Activated T-helper 1 cell treated with anti-CD3 and anti-CD28 coated beads, Interleukin-12 subunit alpha, Interleukin-12 subunit beta, Interleukin-2, Interleukin-4 antibody, amounts not matched to agents 30 ng/mL and 10 ng/mL and 1 ng/mL, durations not matched to agents 14 hours and 24 hours and 36 hours (primary cell): ENCODE measurements at regions of chr3 and their contacts with region 1.

Region 1: DNA sequence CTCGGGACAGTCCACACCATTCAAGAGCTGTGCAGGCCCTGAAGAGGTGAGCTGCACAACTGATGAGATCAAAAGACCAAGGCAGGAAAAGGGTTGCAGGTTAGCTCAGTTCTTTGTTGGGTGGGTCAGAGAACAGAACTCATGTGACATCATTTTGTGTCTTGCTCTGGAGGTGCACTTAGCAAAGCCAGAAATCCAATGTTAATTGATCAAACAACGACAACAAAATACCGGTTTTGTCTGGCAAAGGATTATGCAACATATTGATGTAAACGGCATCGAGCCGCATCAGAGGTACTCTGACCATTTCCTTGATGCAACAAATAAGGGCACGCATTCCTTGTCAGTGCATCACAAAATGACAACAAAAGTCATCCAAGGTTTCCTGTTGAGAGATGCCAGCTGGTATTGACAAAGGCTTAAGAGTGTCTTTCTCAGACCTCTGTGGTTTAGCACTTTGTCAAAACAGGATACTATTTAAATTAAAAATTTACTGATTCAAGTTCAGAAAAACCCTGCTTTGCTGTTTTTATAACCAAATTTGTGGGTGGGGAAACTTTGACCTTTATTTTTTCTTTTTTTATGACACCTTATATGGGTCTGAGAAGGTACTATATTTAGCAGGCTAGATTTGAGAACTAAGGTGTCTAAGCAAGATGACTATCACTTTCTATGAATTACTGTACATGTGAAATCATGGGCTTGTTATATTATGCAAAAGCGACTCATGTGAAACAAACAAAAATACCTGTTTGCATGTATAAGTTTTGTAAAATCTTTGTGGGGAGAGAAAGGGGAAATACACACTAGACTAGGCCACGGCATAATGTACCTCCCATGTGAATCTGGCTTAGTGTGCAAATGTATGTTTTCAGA is 496.1 kb downstream of the FOXP1 start:
- DNase-seq: peak; percentile 44
- H3K4me3 Mint-ChIP-seq: peak overlapping the region; percentile 46
- H3K27ac Mint-ChIP-seq: peak overlapping the region; percentile 89
- H3K4me1 Mint-ChIP-seq: peaks cover 77% of the 10 kb centered on the region
- H3K27me3 Mint-ChIP-seq: peaks cover 2% of the 10 kb centered on the region

Region 2: GRCh38 chr3:69084326-69085167 is 2002.8 kb before region 1 on chr3 and contains the start of gene ARL6IP5:
- intact Hi-C with region 1: loop called (anchors 10 kb)
- DNase-seq: peak; percentile 89
- H3K4me3 Mint-ChIP-seq: peak within 1 kb of the TSS; percentile 98
- H3K27ac Mint-ChIP-seq: peak within 1 kb of the TSS; percentile 94
- H3K4me1 Mint-ChIP-seq: peaks cover 61% of the 10 kb centered on the region
- H3K27me3 Mint-ChIP-seq: no peaks in the 10 kb centered on the region
- total RNA-seq, gene ARL6IP5: 147 and 156 TPM in 2 replicates

Region 3: DNA sequence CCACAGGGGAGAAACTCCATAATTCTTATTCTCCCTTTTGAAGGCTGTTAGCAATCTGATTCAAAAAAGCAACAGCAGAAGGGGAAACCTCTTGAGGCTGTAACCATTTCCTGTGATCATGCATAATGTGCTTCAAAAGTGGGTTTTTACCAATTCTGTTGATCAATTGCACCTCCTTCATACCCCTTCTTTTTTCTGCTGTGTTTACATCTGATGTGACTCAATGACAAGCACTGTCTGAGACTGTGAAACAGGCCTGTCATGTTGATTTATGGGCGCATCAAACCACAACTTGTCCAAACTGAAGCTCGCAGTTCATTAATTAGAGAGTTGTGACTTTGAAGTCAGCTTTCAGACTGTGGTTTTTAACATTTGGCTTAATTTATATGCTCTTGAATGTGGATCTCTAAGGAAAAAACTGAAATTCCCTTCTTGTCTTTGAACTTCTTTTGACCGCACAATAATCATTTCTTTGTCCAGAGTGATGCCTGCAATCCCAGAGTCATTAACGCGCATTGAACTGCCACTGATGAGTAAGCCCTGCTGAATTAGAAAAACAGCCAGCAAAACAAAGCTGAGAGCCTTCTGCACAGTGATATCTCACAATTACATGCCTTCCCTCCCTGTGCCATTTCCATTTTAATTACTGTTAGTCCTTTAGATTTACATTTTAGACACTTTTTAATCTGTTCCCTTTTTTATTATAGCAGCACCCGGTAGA is 36.7 kb before region 1 on chr3:
- intact Hi-C with region 1: loop called (anchors 1 kb)
- DNase-seq: no peak
- H3K4me3 Mint-ChIP-seq: no peak overlapping the region
- H3K27ac Mint-ChIP-seq: peak overlapping the region; percentile 60
- H3K4me1 Mint-ChIP-seq: peaks cover 70% of the 10 kb centered on the region
- H3K27me3 Mint-ChIP-seq: peaks cover 5% of the 10 kb centered on the region

Region 4: GRCh38 chr3:71101014-71101413 is 13.6 kb after region 1 on chr3:
- intact Hi-C with region 1: loop called (anchors 2 kb)
- DNase-seq: no peak
- H3K4me3 Mint-ChIP-seq: peak overlapping the region; percentile 27
- H3K27ac Mint-ChIP-seq: peak overlapping the region; percentile 66
- H3K4me1 Mint-ChIP-seq: peaks cover 70% of the 10 kb centered on the region
- H3K27me3 Mint-ChIP-seq: peaks cover 2% of the 10 kb centered on the region

Region 5: DNA sequence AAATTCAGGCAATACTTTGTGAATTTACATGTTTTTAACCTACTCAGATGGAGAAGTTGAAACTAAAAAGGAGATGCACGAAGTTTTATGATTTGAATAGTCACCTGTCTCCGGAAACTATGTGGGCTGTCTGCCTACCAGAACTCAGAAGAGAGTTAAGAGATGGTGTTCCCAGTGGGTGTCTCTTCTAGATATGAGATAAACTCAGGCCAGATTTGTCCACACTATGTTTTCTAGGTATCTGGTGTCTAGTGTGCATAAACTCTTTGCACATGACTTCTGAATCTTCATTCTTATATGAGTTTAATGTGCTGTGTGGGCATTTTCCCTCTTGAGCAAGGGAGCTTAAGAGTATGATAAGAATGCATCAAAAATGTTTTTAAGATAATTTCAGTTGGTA is 273.4 kb after region 1 on chr3:
- intact Hi-C with region 1: loop called (anchors 1 kb)
- DNase-seq: no peak
- H3K4me3 Mint-ChIP-seq: no peak overlapping the region
- H3K27ac Mint-ChIP-seq: peak overlapping the region; percentile 80
- H3K4me1 Mint-ChIP-seq: peaks cover 19% of the 10 kb centered on the region
- H3K27me3 Mint-ChIP-seq: peaks cover 25% of the 10 kb centered on the region

Region 6: DNA sequence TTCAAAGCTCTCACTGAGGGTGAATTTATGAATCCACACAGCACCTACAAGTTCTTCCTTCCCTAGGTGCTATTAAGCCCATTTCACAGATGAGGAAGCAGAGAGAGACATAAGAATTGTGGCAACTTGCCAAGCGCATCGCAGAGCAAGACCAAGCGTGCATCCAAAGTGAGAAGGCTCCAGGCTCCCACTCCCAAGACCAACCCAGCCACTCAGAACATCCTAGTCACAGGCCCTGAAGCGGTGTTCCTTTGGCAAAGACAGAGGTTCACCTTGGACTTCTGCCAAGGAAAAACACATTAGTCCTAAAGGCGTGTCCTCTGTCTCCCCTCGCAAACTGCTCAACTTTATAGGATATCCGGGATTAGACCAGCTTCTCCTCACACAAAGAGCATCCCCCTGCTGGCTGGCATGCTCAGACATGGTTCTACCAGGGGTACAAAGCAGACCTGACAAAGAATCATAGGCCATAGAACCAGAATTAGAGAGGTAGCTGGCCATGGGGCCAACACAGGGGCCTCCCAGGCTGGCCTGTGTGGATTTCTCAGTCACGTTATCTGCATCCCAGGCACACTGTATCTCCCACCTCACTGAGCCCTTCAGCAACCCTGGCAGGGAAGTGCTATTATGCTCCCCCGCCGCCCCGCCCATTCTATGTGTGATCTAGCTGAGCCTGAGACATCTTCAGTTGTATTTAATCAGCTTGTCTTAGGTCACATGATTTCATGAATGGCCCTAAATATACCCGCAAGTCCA is 335.9 kb after region 1 on chr3:
- intact Hi-C with region 1: loop called (anchors 1 kb)
- DNase-seq: no peak
- H3K4me3 Mint-ChIP-seq: no peak overlapping the region
- H3K27ac Mint-ChIP-seq: no peak overlapping the region
- H3K4me1 Mint-ChIP-seq: peaks cover 22% of the 10 kb centered on the region
- H3K27me3 Mint-ChIP-seq: peaks cover 61% of the 10 kb centered on the region